CD8-positive, alpha-beta memory T cell (primary cell): ENCODE measurements at regions of chr6 and their contacts with region 1.

Region 1: GRCh38 chr6:24991810-24992467 is 56.2 kb upstream of the RIPOR2 start:
- DNase-seq: peak; percentile 53 to 85 (median 70)
- H3K4me3 ChIP-seq: peak overlapping the region; percentile 30
- H3K4me3 Mint-ChIP-seq: peak overlapping the region in 6 of 7 donors; percentile 33 to 79 (median 57)
- H3K27ac ChIP-seq: peak overlapping the region; percentile 6
- H3K27ac Mint-ChIP-seq: peak overlapping the region; percentile 77 to 95 (median 86)
- H3K4me1 ChIP-seq: peaks cover 43% of the 10 kb centered on the region
- H3K4me1 Mint-ChIP-seq: peaks cover 63 to 86% (median 83%) of the 10 kb centered on the region in 3 donors
- H3K27me3 ChIP-seq: no peaks in the 10 kb centered on the region
- H3K27me3 Mint-ChIP-seq: no peaks in the 10 kb centered on the region

Region 2: GRCh38 chr6:24855395-24856245 is 136.3 kb before region 1 on chr6:
- CTCF ChIA-PET with region 1: interaction called, 80 read pairs
- POLR2A ChIA-PET with region 1: interaction called, 12 read pairs
- DNase-seq: peak; percentile 43 to 78 (median 68)
- H3K4me3 ChIP-seq: no peak overlapping the region
- H3K4me3 Mint-ChIP-seq: peak overlapping the region in 6 of 7 donors; percentile 35 to 69 (median 60)
- H3K27ac ChIP-seq: no peak overlapping the region
- H3K27ac Mint-ChIP-seq: peak overlapping the region; percentile 47 to 95 (median 87)
- H3K4me1 ChIP-seq: peaks cover 55% of the 10 kb centered on the region
- H3K4me1 Mint-ChIP-seq: peaks cover 53 to 57% (median 56%) of the 10 kb centered on the region in 3 donors
- H3K27me3 ChIP-seq: no peaks in the 10 kb centered on the region
- H3K27me3 Mint-ChIP-seq: peaks cover 0 to 2% of the 10 kb centered on the region in 2 donors

Region 3: GRCh38 chr6:24888715-24889370 is 103.1 kb before region 1 on chr6:
- CTCF ChIA-PET with region 1: interaction called, 16 read pairs
- POLR2A ChIA-PET with region 1: no interaction called
- DNase-seq: no peak
- H3K4me3 ChIP-seq: no peak overlapping the region
- H3K4me3 Mint-ChIP-seq: peak overlapping the region in 5 of 7 donors; percentile 16 to 62 (median 27)
- H3K27ac ChIP-seq: no peak overlapping the region
- H3K27ac Mint-ChIP-seq: peak overlapping the region; percentile 52 to 95 (median 78)
- H3K4me1 ChIP-seq: peaks cover 85% of the 10 kb centered on the region
- H3K4me1 Mint-ChIP-seq: peaks cover 84 to 98% (median 95%) of the 10 kb centered on the region in 3 donors
- H3K27me3 ChIP-seq: no peaks in the 10 kb centered on the region
- H3K27me3 Mint-ChIP-seq: no peaks in the 10 kb centered on the region

Region 4: GRCh38 chr6:24919004-24919892 is 72.7 kb before region 1 on chr6:
- CTCF ChIA-PET with region 1: interaction called, 87 read pairs
- POLR2A ChIA-PET with region 1: interaction called, 3 read pairs
- DNase-seq: no peak
- H3K4me3 ChIP-seq: peak overlapping the region; percentile 40
- H3K4me3 Mint-ChIP-seq: peak overlapping the region; percentile 63 to 92 (median 71)
- H3K27ac ChIP-seq: no peak overlapping the region
- H3K27ac Mint-ChIP-seq: peak overlapping the region; percentile 67 to 98 (median 87)
- H3K4me1 ChIP-seq: peaks cover 97% of the 10 kb centered on the region
- H3K4me1 Mint-ChIP-seq: peaks cover 89 to 97% (median 97%) of the 10 kb centered on the region in 3 donors
- H3K27me3 ChIP-seq: no peaks in the 10 kb centered on the region
- H3K27me3 Mint-ChIP-seq: no peaks in the 10 kb centered on the region

Region 5: GRCh38 chr6:24940311-24940917 is 51.5 kb before region 1 on chr6:
- CTCF ChIA-PET with region 1: interaction called, 180 read pairs
- POLR2A ChIA-PET with region 1: interaction called, 60 read pairs
- DNase-seq: no peak
- H3K4me3 ChIP-seq: no peak overlapping the region
- H3K4me3 Mint-ChIP-seq: peak overlapping the region in 5 of 7 donors; percentile 4 to 59 (median 45)
- H3K27ac ChIP-seq: no peak overlapping the region
- H3K27ac Mint-ChIP-seq: peak overlapping the region in 5 of 8 donors; percentile 23 to 93 (median 38)
- H3K4me1 ChIP-seq: peaks cover 57% of the 10 kb centered on the region
- H3K4me1 Mint-ChIP-seq: peaks cover 60 to 84% (median 79%) of the 10 kb centered on the region in 3 donors
- H3K27me3 ChIP-seq: no peaks in the 10 kb centered on the region
- H3K27me3 Mint-ChIP-seq: no peaks in the 10 kb centered on the region

Region 6: GRCh38 chr6:24966381-24966780 is 25.6 kb before region 1 on chr6:
- CTCF ChIA-PET with region 1: interaction called, 25 read pairs
- POLR2A ChIA-PET with region 1: no interaction called
- DNase-seq: no peak
- H3K4me3 ChIP-seq: no peak overlapping the region
- H3K4me3 Mint-ChIP-seq: no peak overlapping the region
- H3K27ac ChIP-seq: no peak overlapping the region
- H3K27ac Mint-ChIP-seq: peak overlapping the region in 2 of 8 donors; percentile 33 to 83
- H3K4me1 ChIP-seq: peaks cover 66% of the 10 kb centered on the region
- H3K4me1 Mint-ChIP-seq: peaks cover 82 to 95% (median 95%) of the 10 kb centered on the region in 3 donors
- H3K27me3 ChIP-seq: no peaks in the 10 kb centered on the region
- H3K27me3 Mint-ChIP-seq: peaks cover 0 to 3% of the 10 kb centered on the region in 2 donors

Region 7: DNA sequence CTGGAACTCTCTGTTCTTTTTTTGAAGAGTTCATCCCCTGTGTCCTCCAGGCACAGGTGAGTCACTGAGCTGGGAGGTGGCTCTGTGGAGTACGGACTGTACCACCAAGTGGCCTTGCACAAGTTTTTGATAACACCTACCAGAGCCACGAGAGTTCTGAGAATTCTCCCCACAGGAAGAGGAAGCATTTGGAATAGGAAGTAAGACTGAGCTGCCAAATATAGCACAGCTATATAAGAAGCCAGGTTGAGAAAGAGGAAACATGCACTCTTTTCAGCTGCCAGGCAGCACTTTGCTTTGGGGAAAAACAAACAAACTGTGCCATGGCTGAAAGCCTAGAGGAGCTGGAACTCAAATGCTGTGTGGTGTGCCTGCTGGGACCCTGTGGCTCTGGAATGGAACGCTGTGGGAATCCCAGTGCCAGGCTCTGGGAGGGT is 14.6 kb after region 1 on chr6:
- CTCF ChIA-PET with region 1: interaction called, 18 read pairs
- POLR2A ChIA-PET with region 1: no interaction called
- DNase-seq: peak in 3 of 5 donors; percentile 25 to 36 (median 36)
- H3K4me3 ChIP-seq: peak overlapping the region; percentile 32
- H3K4me3 Mint-ChIP-seq: peak overlapping the region in 6 of 7 donors; percentile 50 to 88 (median 66)
- H3K27ac ChIP-seq: peak overlapping the region; percentile 49
- H3K27ac Mint-ChIP-seq: peak overlapping the region; percentile 22 to 96 (median 86)
- H3K4me1 ChIP-seq: peaks cover 48% of the 10 kb centered on the region
- H3K4me1 Mint-ChIP-seq: peaks cover 68 to 72% (median 72%) of the 10 kb centered on the region in 3 donors
- H3K27me3 ChIP-seq: no peaks in the 10 kb centered on the region
- H3K27me3 Mint-ChIP-seq: no peaks in the 10 kb centered on the region